ENCODE measurements at regions of chr18 and their contacts with region 1.

Region 1: GRCh38 chr18:28108814-28109213 is 68.1 kb downstream of the CDH2 start:
- DNase-seq: no peak
- H3K4me3 Mint-ChIP-seq: no peak overlapping the region
- H3K27ac Mint-ChIP-seq: no peak overlapping the region
- H3K4me1 Mint-ChIP-seq: peaks cover 23% of the 10 kb centered on the region
- H3K27me3 Mint-ChIP-seq: no peaks in the 10 kb centered on the region
- CTCF ChIP-seq: no peak

Region 2: DNA sequence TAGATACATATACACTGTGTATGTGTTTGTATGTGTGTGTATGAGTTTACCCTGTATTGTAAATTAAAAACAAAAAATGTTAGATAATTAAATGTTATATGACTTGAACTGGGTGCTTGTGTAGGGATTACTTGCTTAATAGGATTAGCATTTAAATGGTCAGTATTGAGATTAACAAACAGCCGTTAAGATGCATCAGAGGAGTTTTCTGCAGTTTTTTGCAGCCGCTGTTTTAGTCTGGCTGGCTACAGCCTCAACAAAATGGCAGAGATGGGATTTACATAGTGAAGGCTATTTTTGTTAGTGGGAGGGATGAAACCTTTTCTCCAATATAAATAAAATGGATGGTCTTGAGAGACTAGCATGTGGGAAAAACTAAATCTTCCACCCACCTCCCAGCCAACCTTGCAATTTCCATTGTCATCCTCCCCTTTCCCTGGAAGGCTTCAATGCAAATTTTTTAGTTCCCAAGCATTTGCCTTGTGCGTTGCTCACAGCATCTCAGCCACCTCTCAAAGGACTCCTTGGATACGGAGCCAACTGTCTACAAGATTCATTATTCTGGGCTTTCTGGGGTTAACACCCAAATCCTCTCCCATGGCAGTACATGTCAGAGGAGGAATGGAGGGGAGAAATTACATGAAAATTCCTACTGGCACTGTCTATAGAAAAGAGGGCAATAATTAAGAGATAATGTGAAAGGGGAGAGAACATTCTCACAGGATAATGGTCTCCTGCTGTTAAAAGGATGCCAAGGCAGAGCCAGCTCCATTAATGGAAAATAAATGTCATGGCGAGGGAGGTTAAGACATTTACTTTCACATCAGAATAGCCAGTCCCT is 283.8 kb before region 1 on chr18:
- CTCF ChIA-PET with region 1: no interaction called
- intact Hi-C with region 1: no loop called
- DNase-seq: no peak
- H3K4me3 Mint-ChIP-seq: no peak overlapping the region
- H3K27ac Mint-ChIP-seq: no peak overlapping the region
- H3K4me1 Mint-ChIP-seq: no peaks in the 10 kb centered on the region
- H3K27me3 Mint-ChIP-seq: no peaks in the 10 kb centered on the region
- CTCF ChIP-seq: no peak

Region 3: DNA sequence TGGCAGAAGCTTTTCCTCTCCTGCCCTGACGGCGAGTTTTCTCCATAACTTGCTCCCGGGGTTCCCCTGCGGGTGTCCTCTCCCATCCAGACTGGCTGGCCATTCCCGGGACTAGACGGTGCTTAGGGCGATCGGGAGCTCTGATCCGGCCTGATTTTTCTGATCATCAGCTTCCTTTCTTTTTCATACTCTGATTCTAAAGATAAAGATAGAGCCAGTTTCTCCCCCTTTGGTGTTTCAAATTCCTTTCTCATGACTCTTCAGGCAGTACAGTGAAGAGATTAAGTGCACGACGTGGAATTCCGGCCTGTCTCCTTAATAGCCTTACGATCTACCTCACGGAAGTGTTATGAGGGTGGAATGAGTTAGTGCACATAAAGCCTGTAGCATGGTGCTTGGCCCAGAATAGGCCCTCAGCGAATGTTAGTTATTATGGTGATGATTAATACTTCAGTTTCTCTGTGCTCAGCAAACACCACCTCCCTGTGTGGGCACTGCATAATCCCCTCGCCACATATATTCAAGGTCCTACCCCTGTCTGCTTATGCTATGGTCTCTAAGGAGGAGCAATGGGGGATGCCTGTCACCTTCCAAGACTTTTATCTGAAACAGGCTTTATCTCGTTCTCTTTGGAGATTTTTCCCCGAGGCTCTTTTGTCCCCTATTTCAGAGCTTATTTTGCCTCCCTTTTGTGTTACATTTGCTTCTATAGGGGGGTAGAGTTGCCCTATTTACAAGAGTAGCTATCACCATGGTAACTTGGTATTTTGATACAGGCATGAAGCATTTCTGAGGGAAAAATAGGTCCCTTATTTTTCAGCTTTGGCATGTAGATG is 186.7 kb before region 1 on chr18:
- CTCF ChIA-PET with region 1: no interaction called
- intact Hi-C with region 1: loop called (anchors 5 kb)
- DNase-seq: peak; percentile 52
- H3K4me3 Mint-ChIP-seq: peak overlapping the region; percentile 74
- H3K27ac Mint-ChIP-seq: peak overlapping the region; percentile 96
- H3K4me1 Mint-ChIP-seq: peaks cover 14% of the 10 kb centered on the region
- H3K27me3 Mint-ChIP-seq: no peaks in the 10 kb centered on the region
- CTCF ChIP-seq: no peak

Region 4: GRCh38 chr18:28013066-28013465 is 95.7 kb before region 1 on chr18:
- CTCF ChIA-PET with region 1: no interaction called
- intact Hi-C with region 1: loop called (anchors 5 kb)
- DNase-seq: no peak
- H3K4me3 Mint-ChIP-seq: no peak overlapping the region
- H3K27ac Mint-ChIP-seq: no peak overlapping the region
- H3K4me1 Mint-ChIP-seq: peaks cover 10% of the 10 kb centered on the region
- H3K27me3 Mint-ChIP-seq: no peaks in the 10 kb centered on the region
- CTCF ChIP-seq: peak; percentile 23

Region 5: GRCh38 chr18:28176933-28177827 is 68.4 kb after region 1 on chr18 and contains the start of gene CDH2:
- CTCF ChIA-PET with region 1: no interaction called
- intact Hi-C with region 1: no loop called
- DNase-seq: no peak
- H3K4me3 Mint-ChIP-seq: peak within 1 kb of the TSS; percentile 68
- H3K27ac Mint-ChIP-seq: peak within 1 kb of the TSS; percentile 28
- H3K4me1 Mint-ChIP-seq: no peaks in the 10 kb centered on the region
- H3K27me3 Mint-ChIP-seq: no peaks in the 10 kb centered on the region
- CTCF ChIP-seq: no peak
- total RNA-seq, gene CDH2: 1.5 and 2.3 TPM in 2 replicates

Region 6: DNA sequence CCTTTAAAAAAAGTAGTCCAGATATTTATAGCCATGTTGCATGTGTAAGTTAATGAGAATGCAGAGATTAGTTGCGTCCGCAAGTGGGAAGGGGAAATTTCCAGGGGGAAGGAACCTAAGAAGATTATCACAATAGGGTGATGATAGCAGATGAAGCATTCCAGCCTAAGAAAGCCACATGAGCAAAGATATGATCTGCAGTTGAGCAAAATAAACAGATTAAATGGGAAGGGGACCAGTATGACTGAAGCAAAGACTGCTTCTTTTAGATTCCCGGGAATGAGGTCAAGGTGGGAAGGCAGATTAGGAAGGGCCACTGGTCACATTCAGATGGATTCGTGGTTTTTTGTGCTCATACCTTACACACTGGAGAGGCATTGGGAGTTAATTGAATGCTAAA is 222.7 kb after region 1 on chr18:
- CTCF ChIA-PET with region 1: no interaction called
- intact Hi-C with region 1: no loop called
- DNase-seq: no peak
- H3K4me3 Mint-ChIP-seq: no peak overlapping the region
- H3K27ac Mint-ChIP-seq: no peak overlapping the region
- H3K4me1 Mint-ChIP-seq: no peaks in the 10 kb centered on the region
- H3K27me3 Mint-ChIP-seq: no peaks in the 10 kb centered on the region
- CTCF ChIP-seq: no peak